Transverse colon (tissue), 4 donors: ENCODE measurements at regions of chr14 and their contacts with region 1.

Region 1: DNA sequence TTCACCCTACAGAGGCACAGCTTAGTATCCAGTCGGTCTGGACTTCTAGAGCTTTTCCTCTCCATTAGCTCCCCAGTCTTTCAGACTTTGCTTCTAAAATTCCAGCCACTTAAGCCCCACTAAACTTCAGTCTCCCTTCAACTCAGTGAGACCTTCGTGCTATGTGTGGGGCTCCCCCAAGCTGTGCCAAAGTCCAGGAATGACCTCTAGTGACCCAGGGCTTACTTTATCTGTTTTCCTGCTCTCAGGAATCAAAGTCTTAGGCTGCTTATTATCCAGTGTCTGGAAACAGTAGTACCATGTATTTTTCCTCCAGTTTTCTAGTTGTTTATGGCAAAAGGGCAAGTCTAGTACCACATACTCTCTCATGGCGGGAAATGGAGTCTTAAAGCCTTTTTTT is 77.8 kb downstream of the IFT43 start:
- DNase-seq: no peak
- H3K4me3 ChIP-seq: no peak overlapping the region
- H3K27ac ChIP-seq: no peak overlapping the region
- H3K4me1 ChIP-seq: no peaks in the 10 kb centered on the region
- H3K27me3 ChIP-seq: no peaks in the 10 kb centered on the region
- CTCF ChIP-seq: no peak
- EP300 ChIP-seq: no peak
- POLR2A ChIP-seq: no peak

Region 2: GRCh38 chr14:76250302-76250701 is 187.0 kb after region 1 on chr14:
- in situ Hi-C with region 1: no loop called
- intact Hi-C with region 1: no loop called
- DNase-seq: no peak
- H3K4me3 ChIP-seq: no peak overlapping the region
- H3K27ac ChIP-seq: no peak overlapping the region
- H3K4me1 ChIP-seq: no peaks in the 10 kb centered on the region
- H3K27me3 ChIP-seq: no peaks in the 10 kb centered on the region
- CTCF ChIP-seq: no peak
- EP300 ChIP-seq: no peak
- POLR2A ChIP-seq: no peak

Region 3: GRCh38 chr14:77329872-77330271 is 1266.5 kb after region 1 on chr14:
- in situ Hi-C with region 1: no loop called
- intact Hi-C with region 1: loop called (anchors 5 kb)
- DNase-seq: no peak
- H3K4me3 ChIP-seq: no peak overlapping the region
- H3K27ac ChIP-seq: no peak overlapping the region
- H3K4me1 ChIP-seq: no peaks in the 10 kb centered on the region
- H3K27me3 ChIP-seq: no peaks in the 10 kb centered on the region
- CTCF ChIP-seq: no peak
- EP300 ChIP-seq: no peak
- POLR2A ChIP-seq: no peak